ENCODE measurements at regions of chr17 and their contacts with region 1.

Region 1: GRCh38 chr17:49788478-49789242 is at the start of gene KAT7:
- DNase-seq: peak; percentile 96
- ATAC-seq: peak; percentile 92
- H3K4me3 Mint-ChIP-seq: peak within 1 kb of the TSS; percentile 91
- H3K27ac Mint-ChIP-seq: peak within 1 kb of the TSS; percentile 97
- H3K4me1 Mint-ChIP-seq: peaks cover 38% of the 10 kb centered on the region
- H3K27me3 Mint-ChIP-seq: peaks cover 2% of the 10 kb centered on the region
- total RNA-seq, gene KAT7: 91.7 to 92.5 TPM

Region 2: DNA sequence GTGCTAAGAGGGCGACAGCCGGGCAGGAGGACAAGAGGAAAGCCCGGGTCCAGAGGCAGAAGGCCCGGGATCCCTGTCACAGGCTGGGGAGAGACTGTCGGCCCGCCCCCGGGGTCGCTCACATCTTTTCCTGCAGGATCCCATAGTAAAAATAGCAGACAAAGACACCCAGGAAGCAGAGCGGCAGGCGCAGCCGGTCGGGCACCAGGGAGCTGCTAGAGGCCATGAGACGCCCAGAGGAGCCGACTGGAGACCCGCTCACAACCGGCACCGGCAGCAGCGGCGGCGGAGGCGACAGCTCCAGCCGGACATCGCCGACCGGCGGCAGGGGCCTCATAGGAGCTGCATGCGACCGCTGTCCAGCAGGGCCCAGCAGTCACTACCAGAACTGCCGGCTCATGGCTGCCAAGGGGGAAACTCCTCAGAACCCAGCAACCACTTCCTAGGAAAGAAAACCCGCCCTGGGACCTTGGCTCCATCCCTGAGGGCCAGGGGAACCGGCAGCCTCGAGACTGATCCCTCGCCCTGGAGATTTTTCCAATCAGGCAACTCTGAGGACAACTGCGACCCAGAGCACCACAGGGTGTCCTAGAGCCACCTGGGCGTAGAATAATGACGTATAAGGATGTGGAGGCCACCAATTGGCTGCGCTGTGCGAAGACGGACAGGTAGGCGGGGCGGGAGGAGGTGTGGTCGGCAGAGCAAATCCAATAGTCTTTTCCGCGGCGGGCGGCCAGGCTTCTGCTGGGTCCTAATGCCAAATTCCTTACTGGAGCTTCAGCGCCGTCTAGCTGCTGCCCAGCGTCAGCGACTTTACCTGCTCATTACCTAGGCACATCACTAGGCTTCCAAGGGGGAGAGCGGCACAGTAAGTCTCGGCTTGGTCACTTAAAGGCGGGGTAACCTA is 80.8 kb before region 1 on chr17 and contains the start of gene SLC35B1:
- POLR2A ChIA-PET with region 1: interaction called, 16 read pairs
- DNase-seq: peak; percentile 95
- ATAC-seq: peak; percentile 98
- H3K4me3 Mint-ChIP-seq: peak within 1 kb of the TSS; percentile 93
- H3K27ac Mint-ChIP-seq: peak within 1 kb of the TSS; percentile 98
- H3K4me1 Mint-ChIP-seq: peaks cover 36% of the 10 kb centered on the region
- H3K27me3 Mint-ChIP-seq: no peaks in the 10 kb centered on the region
- total RNA-seq, gene SLC35B1: 45.9 to 48.5 TPM

Region 3: DNA sequence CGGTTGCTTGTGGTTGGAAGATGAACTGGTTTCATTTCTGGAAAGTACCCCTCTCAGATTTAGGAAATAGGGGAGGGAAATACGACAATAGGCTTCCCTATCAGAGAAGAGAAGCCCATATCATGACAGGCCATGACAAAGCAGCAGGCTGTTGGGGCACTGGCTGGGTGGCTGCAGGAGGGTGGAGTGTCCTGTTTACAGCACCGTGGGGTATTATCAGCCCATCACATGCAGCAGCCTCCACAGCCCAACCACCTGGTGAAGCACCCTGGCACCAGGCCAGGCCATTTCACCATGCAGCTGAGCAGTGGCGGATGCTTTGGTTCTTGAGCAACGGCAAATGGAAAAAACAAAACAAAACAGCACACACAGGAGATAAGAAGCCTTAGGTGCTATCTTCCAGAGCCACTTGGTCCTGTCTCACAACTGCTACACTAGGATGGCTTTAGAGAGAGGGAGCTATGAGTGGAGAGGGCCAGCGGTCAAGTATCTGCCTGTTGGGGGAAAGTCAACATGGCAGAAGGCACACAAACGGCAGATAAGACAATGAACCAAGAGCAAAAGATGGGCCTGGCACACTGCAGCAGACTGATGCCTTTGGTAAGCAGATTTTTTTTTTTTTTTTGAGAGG is 48.9 kb before region 1 on chr17:
- POLR2A ChIA-PET with region 1: interaction called, 13 read pairs
- DNase-seq: peak; percentile 81
- ATAC-seq: peak; percentile 96
- H3K4me3 Mint-ChIP-seq: peak overlapping the region; percentile 92
- H3K27ac Mint-ChIP-seq: peak overlapping the region; percentile 99
- H3K4me1 Mint-ChIP-seq: peaks cover 55% of the 10 kb centered on the region
- H3K27me3 Mint-ChIP-seq: no peaks in the 10 kb centered on the region

Region 4: GRCh38 chr17:49748791-49749190 is 39.9 kb before region 1 on chr17:
- POLR2A ChIA-PET with region 1: interaction called, 19 read pairs
- DNase-seq: peak; percentile 32
- ATAC-seq: peak; percentile 69
- H3K4me3 Mint-ChIP-seq: peak overlapping the region; percentile 79
- H3K27ac Mint-ChIP-seq: peak overlapping the region; percentile 85
- H3K4me1 Mint-ChIP-seq: peaks cover 59% of the 10 kb centered on the region
- H3K27me3 Mint-ChIP-seq: no peaks in the 10 kb centered on the region

Region 5: DNA sequence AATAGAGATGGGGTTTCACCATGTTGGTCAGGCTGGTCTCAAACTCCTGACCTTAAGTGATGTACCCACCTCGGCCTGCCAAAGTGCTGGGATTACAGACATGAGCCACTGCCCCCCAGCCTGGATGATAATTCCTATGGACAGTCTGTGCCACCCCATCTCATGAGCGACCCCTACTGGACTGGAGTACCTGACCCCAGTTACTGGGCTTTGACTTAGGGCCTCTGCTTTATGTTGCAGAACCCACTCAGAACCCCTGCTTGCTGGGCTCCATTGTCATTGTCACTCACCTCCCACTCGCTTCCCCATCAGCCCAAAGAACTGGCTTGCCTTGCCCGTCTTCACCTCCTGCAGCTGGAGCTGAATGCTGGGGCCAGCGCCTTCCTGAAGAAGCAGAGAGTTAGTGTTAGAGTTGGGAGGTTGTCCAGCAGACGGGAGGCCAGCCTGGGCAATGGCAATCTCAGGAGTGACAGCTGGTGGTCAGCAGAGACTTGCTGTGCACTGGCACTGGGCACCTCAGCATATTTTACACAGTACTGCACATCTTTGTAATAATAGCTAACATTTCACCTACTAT is 55.2 kb after region 1 on chr17:
- POLR2A ChIA-PET with region 1: no interaction called
- DNase-seq: no peak
- ATAC-seq: no peak
- H3K4me3 Mint-ChIP-seq: no peak overlapping the region
- H3K27ac Mint-ChIP-seq: no peak overlapping the region
- H3K4me1 Mint-ChIP-seq: peaks cover 5% of the 10 kb centered on the region
- H3K27me3 Mint-ChIP-seq: no peaks in the 10 kb centered on the region

Region 6: GRCh38 chr17:49928837-49929475 is 140.3 kb after region 1 on chr17:
- POLR2A ChIA-PET with region 1: no interaction called
- DNase-seq: no peak
- ATAC-seq: no peak
- H3K4me3 Mint-ChIP-seq: no peak overlapping the region
- H3K27ac Mint-ChIP-seq: no peak overlapping the region
- H3K4me1 Mint-ChIP-seq: no peaks in the 10 kb centered on the region
- H3K27me3 Mint-ChIP-seq: peaks cover 20% of the 10 kb centered on the region